ENCODE measurements at regions of chr1 and their contacts with region 1.

Region 1: DNA sequence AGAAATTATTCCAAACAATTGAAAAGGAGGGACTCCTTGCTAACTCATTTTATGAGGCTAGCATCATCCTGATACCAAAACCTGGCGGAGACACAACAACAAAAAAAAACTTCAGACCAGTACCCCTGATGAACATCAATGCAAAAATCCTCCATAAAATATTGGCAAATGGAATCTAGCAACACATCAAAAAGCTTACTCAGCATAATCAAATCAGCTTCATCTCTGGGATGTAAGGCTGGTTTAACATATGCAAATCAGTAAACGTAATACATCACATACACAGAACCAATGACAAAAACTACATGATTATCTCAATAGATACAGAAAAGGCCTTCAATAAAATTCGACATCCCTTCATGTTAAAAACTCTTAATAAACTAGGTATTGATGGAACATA is 440.1 kb downstream of the NUF2 start:
- DNase-seq: no peak
- ATAC-seq: no peak
- H3K4me3 Mint-ChIP-seq: no peak overlapping the region
- H3K27ac Mint-ChIP-seq: no peak overlapping the region
- H3K4me1 Mint-ChIP-seq: no peaks in the 10 kb centered on the region
- H3K27me3 Mint-ChIP-seq: no peaks in the 10 kb centered on the region

Region 2: DNA sequence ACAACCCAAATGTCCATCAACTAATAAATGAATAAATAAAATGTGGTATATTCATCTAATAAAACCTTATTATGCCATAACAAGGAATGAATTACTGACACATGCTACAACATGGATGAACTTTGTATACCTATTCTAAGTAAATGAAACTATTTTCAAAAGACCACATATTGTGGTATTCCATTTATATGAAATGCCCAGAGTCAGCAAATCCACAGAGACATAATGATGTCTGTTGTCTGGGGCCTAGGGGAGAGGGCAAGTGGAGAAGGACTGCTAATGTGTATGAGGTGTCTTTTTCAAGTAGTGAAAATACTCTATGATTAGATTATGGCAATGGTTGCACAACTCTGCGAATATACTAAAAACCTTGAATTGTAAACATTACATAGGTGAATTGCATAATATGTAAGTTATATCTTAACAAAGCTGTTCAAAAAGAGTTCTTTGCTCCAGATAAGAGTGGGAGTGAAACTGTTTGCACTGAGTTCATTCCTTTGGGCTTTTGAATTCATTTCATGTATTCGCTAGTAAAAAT is 24.0 kb after region 1 on chr1:
- CTCF ChIA-PET with region 1: no interaction called
- POLR2A ChIA-PET with region 1: no interaction called
- intact Hi-C with region 1: loop called in 1 of 2 experiments (anchors 2 kb)
- DNase-seq: no peak
- ATAC-seq: no peak
- H3K4me3 Mint-ChIP-seq: no peak overlapping the region
- H3K27ac Mint-ChIP-seq: no peak overlapping the region
- H3K4me1 Mint-ChIP-seq: no peaks in the 10 kb centered on the region
- H3K27me3 Mint-ChIP-seq: no peaks in the 10 kb centered on the region

Measured in activated CD4-positive, alpha-beta T cell treated with anti-CD3 and anti-CD28 coated beads for 36 hours (primary cell).